ENCODE measurements at regions of chr19 and their contacts with region 1.

Region 1: GRCh38 chr19:16185123-16185767 is at the start of gene FAM32A:
- DNase-seq: peak; percentile 99
- ATAC-seq: peak; percentile 98
- total RNA-seq, gene FAM32A: 38.8 TPM

Region 2: DNA sequence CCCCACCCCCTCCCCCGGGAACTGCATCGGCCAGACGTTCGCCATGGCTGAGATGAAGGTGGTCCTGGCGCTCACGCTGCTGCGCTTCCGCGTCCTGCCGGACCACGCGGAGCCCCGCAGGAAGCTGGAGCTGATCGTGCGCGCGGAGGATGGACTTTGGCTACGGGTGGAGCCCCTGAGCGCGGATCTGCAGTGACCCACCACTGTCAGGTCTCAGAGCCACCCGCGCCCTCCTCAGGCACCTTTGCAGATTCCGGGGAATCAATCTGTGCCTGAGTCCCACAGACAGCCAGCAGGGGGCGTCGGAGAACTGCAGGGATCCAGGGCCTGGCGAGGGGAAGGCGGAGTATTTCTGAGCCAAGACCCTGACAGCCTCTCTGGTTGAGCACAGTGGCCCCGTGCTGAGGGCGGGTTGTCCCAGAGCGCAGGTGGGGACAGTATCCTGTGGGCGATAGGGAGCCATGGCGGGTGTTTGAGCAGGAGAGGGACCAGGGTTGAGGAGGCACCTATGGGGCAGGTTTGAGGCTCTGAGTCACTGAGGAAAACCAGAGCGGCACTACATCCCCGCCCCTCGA is 600.6 kb before region 1 on chr19:
- intact Hi-C with region 1: loop called (anchors 5 kb)
- DNase-seq: peak; percentile 92
- ATAC-seq: peak; percentile 79

Region 3: GRCh38 chr19:15629003-15629880 is 556.0 kb before region 1 on chr19:
- intact Hi-C with region 1: loop called (anchors 2 kb)
- DNase-seq: peak; percentile 92
- ATAC-seq: peak; percentile 81

Region 4: DNA sequence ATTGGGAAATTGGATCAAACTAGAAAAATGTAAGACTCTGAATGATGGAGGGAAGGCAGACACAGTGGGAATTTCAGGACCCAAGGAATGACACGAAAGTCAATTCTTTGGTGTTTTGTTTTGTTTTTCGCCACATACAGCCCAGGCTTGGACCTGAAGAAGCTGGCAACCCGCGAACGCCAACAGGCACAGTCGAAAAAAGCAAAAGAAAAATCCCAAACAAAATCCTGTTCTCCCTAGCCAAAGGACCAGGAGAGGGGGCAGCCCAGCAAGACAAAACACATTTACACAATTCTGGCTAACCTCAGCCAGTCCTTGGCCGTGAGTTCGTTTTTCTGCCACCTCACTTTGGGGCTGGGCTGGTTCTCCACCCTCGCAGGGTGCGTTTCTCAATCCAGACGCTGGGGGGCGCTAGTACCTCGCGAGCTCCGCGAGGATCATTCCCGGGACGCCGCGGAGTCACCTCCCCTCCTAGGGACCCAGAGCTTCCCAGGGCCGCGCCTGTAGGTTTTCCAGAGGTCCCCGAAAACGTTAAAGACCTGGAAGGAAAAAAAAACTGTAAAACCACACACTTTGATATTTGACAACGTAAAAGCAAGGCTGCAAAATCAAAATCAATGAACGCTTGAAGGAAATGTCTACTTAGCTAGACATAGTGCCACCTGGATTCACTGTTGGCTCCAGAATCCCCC is 143.8 kb before region 1 on chr19:
- intact Hi-C with region 1: loop called (anchors 1 kb)
- DNase-seq: peak; percentile 89
- ATAC-seq: peak; percentile 91

Region 5: DNA sequence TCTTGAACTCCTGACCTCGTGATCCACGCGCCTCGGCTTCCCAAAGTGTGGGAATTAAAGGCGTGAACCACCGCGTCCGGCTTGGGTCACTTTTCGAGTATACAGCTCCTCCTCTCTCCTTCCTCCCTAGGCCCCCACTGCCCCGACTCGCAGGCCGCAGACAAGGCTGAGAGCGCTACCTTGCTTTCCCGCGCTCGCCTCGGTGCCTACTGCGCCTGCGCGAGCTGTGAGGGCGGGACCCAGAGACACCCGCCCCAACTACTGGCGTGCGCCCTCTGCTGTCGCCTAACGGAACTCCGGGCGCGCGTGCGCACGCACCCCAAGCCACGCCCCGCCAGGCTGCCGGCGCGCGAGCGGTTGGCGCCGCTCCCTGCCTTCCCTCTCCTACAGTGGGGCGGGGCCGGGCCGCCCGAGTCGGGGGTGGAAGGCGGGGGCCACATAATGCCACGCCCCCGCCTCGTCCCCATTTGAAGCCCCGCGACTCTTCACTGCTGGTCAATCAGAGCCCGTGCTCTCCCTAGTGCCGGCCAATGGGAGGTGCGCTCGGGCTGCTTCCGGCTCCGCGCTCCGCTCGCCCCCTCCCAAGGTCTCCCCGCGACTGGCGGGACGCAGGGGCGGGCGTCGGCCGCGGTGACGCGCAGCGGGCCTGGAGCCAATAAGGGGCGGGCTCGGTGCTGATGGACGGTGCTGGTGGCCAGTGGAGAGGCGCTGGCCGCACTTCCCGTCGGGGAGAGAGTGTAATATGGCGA is 73.9 kb before region 1 on chr19 and contains the start of gene RAB8A:
- intact Hi-C with region 1: loop called (anchors 2 kb)
- DNase-seq: peak; percentile 99
- ATAC-seq: peak; percentile 98
- total RNA-seq, gene RAB8A: 25.6 TPM

Region 6: DNA sequence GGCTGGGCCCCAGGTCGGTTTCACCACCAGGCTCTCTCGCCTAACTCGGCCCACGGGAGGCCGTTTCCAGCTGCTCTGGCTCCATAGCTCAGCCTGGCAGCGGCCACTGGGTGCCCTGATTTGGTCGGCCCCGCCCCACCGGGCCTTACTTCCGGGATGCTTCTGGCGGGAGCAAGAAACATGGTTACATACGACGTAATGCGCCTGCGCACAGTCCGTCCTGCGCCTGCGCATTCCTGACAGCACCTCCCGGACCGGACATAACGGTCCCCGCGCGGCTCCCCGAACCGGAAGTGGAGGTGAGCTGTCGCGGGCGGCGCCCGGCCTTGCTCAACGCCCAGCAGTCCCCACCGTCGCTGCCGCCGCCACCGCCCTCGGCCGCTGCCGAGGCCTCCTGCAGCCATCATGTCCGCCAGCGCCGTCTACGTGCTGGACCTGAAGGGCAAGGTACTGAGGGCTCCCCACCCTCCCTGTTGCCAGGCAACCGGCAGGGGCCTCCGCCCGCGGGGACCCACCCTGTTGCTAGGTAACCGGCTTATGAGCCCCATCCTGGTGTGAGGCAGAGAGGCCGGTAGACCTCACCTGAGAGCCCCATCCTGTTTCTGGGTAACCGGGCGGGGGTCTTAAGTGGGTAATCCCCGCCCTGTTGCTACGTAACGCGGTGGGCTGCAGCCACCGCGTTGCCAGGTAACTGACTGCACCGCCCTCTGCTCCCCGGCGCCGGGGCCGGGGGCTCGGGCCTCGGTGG is 12.6 kb after region 1 on chr19 and contains the start of gene AP1M1:
- intact Hi-C with region 1: loop called (anchors 1 kb)
- DNase-seq: peak; percentile 99
- ATAC-seq: peak; percentile 96
- total RNA-seq, gene AP1M1: 39.4 TPM

Measured in Right ventricle myocardium inferior (tissue), 1 donor.